Activated CD8-positive, alpha-beta T cell treated with anti-CD3 and anti-CD28 coated beads for 36 hours (primary cell): ENCODE measurements at regions of chr11 and their contacts with region 1.

Region 1: DNA sequence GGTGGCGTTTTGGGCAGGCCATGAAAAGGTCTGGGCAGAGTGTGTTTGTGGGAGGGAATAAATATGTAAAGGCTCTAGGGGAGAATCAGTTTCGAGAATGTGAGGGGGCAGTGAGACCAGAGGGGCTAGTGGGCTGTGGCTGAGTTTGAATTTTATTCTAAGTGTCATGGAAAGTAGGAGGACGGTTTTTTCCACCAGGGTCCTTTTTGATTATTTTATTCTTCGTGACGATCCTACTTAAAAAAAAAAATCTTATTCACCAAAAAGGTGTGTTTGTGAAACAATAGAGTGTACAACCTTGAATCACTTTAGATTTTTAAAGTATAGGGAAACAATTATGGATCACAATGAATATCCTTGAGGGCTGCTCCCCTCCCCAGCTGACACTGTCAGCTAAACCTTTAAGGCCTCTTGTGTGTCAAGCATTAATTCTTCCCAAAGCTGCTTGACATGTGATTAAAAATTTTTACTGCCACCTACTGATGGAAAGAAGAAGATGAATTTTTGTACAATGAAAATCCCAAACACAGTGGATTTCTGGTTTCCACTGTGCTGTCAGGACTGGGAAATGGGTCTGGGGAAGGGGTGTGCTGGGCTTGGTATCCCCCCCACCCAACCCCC is 107.5 kb upstream of the OR4B1 start:
- DNase-seq: no peak
- ATAC-seq: peak; percentile 22
- H3K4me3 Mint-ChIP-seq: peak overlapping the region; percentile 59
- H3K27ac Mint-ChIP-seq: peak overlapping the region; percentile 95
- H3K4me1 Mint-ChIP-seq: peaks cover 46% of the 10 kb centered on the region
- H3K27me3 Mint-ChIP-seq: no peaks in the 10 kb centered on the region
- CTCF ChIP-seq: no peak

Region 2: GRCh38 chr11:47938791-47939560 is 170.2 kb before region 1 on chr11:
- CTCF ChIA-PET with region 1: interaction called, 161 read pairs
- POLR2A ChIA-PET with region 1: interaction called, 7 read pairs
- intact Hi-C with region 1: loop called (anchors 1 kb)
- DNase-seq: no peak
- ATAC-seq: no peak
- H3K4me3 Mint-ChIP-seq: no peak overlapping the region
- H3K27ac Mint-ChIP-seq: no peak overlapping the region
- H3K4me1 Mint-ChIP-seq: peaks cover 16% of the 10 kb centered on the region
- H3K27me3 Mint-ChIP-seq: no peaks in the 10 kb centered on the region
- CTCF ChIP-seq: no peak

Region 3: GRCh38 chr11:47983464-47984397 is 125.4 kb before region 1 on chr11:
- CTCF ChIA-PET with region 1: interaction called, 11 read pairs
- POLR2A ChIA-PET with region 1: no interaction called
- intact Hi-C with region 1: no loop called
- DNase-seq: no peak
- ATAC-seq: no peak
- H3K4me3 Mint-ChIP-seq: peak overlapping the region; percentile 67
- H3K27ac Mint-ChIP-seq: peak overlapping the region; percentile 84
- H3K4me1 Mint-ChIP-seq: peaks cover 49% of the 10 kb centered on the region
- H3K27me3 Mint-ChIP-seq: no peaks in the 10 kb centered on the region
- CTCF ChIP-seq: no peak

Region 4: DNA sequence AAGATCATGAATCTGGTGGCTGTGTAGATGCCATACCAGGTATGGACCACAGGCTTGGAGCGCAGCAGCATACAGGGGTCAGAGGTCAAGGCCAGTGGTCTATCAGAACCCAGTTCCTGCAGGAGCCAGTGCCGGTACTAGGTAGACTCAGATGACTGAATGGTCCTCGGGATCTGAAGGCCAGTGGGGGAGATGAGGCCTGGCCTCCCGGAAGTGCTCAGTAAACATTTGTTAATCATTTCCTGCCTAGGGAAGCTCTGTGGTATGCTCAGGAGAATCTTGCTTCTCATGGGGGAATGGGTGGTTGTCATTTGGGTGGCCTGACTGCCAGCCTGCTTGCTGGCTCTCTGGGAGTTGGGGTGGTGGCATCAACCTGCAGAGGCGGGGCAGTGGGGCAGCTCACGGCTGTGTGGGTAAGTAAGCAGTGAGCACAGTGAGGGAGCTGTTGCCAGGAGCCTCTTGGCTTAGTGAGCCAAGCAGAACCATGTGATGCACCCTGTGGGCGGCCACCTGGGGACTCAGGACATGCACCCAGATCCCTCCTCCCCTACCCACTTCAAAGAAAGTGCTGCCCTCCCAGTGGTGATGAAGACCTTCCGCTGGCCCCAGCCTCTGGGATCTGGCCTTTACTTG is 95.8 kb before region 1 on chr11:
- CTCF ChIA-PET with region 1: interaction called, 11 read pairs
- POLR2A ChIA-PET with region 1: interaction called, 5 read pairs
- intact Hi-C with region 1: no loop called
- DNase-seq: peak; percentile 85
- ATAC-seq: peak; percentile 38
- H3K4me3 Mint-ChIP-seq: peak overlapping the region; percentile 38
- H3K27ac Mint-ChIP-seq: peak overlapping the region; percentile 97
- H3K4me1 Mint-ChIP-seq: peaks cover 86% of the 10 kb centered on the region
- H3K27me3 Mint-ChIP-seq: no peaks in the 10 kb centered on the region
- CTCF ChIP-seq: no peak

Region 5: DNA sequence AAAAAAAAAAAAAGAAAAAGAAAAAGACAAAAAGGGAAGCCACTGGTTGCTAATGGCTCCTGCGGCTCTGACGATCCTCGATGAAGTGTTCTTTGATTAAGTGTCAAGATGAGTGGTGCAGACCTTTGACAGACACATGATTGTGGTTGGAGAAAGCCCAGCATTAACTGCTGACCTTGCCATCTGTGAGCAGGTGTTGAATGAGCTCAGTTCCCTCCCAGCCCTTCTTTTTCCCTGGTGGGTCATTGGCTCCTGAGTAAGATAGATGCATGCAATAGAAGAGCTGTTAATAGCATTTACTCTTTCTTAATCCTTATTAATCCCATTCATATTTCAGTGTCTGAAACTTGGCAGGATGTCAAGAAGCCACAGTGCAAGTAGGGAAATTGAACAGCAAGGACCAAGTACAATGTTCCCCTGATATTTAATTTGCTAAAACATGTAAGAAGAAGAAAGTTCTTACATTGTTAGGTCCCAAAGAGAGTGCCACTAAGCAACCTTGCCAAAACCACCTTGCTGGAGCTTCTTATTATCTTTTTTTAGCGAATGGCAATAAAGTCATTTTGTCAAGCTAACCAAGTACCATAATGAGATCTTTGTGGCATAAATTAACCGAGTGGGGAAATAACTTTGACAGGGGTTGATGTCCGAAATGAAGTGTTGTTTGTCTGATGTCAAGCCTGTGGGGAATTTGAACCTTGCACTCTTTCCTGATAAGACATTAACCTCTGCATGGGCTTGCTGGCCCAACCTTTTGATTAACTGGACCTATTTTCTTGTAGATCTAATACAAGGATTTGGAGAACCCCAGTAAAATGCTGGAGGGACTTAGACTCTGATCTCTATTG is 15.1 kb before region 1 on chr11:
- CTCF ChIA-PET with region 1: interaction called, 23 read pairs
- POLR2A ChIA-PET with region 1: interaction called, 6 read pairs
- intact Hi-C with region 1: no loop called
- DNase-seq: no peak
- ATAC-seq: no peak
- H3K4me3 Mint-ChIP-seq: no peak overlapping the region
- H3K27ac Mint-ChIP-seq: no peak overlapping the region
- H3K4me1 Mint-ChIP-seq: peaks cover 63% of the 10 kb centered on the region
- H3K27me3 Mint-ChIP-seq: no peaks in the 10 kb centered on the region
- CTCF ChIP-seq: no peak